ENCODE measurements at regions of chr2 and their contacts with region 1.

Region 1: GRCh38 chr2:143217512-143218115 is 88.4 kb downstream of the ARHGAP15 start:
- DNase-seq: no peak
- ATAC-seq: no peak
- H3K4me3 ChIP-seq: no peak overlapping the region
- H3K4me3 Mint-ChIP-seq: no peak overlapping the region
- H3K27ac ChIP-seq: peak overlapping the region in 1 of 2 donors; percentile 6
- H3K27ac Mint-ChIP-seq: peak overlapping the region; percentile 65
- H3K4me1 ChIP-seq: peaks cover 5% of the 10 kb centered on the region
- H3K4me1 Mint-ChIP-seq: peaks cover 68% of the 10 kb centered on the region
- H3K27me3 ChIP-seq: no peaks in the 10 kb centered on the region
- H3K27me3 Mint-ChIP-seq: no peaks in the 10 kb centered on the region
- CTCF ChIP-seq: no peak

Region 2: DNA sequence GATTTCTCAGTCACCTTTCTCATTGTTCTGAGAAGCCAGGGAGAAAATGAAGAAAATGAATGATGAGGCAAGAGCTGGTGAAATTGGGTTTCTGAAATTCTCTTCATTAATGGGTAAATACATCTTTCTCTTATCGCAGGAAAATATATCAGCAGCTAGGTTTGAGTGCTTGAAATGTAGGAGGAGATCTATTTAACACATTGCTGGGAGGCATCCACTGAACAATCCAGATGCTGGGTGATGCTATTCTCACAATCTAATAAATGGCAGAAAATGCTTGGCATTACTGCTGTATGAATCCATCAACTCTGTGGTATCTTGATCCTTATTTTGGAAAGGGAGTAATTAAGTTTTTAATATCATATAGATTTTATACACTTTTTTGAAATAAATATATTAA is 887.2 kb before region 1 on chr2:
- CTCF ChIA-PET with region 1: no interaction called
- POLR2A ChIA-PET with region 1: no interaction called
- intact Hi-C with region 1: no loop called
- DNase-seq: no peak
- ATAC-seq: no peak
- H3K4me3 ChIP-seq: no peak overlapping the region
- H3K4me3 Mint-ChIP-seq: no peak overlapping the region
- H3K27ac ChIP-seq: no peak overlapping the region
- H3K27ac Mint-ChIP-seq: no peak overlapping the region
- H3K4me1 ChIP-seq: no peaks in the 10 kb centered on the region
- H3K4me1 Mint-ChIP-seq: no peaks in the 10 kb centered on the region
- H3K27me3 ChIP-seq: no peaks in the 10 kb centered on the region
- H3K27me3 Mint-ChIP-seq: no peaks in the 10 kb centered on the region
- CTCF ChIP-seq: no peak

Region 3: DNA sequence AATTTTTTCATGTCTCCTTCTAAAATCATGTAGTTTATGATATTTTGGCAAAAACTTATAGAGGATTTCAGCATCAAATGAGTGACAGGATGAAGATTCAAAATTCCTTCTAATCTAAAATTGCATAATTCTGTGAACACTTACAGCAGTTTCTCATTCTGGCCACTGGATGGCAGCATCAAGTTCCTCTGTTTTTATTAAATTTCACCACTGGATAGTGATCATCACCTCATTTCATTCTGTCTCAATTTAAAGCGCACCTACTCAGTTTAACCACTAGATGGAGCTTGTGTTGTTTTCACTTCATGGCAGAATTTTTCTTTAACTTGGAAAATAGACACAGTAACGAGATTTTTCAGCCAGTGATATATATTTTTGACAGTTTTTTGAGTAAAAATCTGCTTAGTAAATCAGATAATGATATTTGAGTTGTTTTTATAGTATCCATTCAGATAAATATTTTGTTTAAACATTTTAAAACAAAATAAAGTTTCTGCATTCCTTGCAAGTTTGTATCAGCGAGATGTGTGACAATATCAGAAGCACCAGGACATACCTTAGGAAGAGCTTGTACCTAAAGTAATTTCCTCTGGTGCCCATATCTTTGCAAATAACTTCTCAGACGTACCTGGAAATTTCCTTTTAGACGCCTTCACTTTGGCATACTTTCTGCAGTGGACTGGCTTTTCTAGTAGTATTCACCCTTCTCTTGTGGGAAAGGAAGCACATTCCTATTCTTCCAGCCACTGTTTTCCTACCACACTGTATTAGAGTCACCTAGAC is 183.1 kb before region 1 on chr2:
- CTCF ChIA-PET with region 1: interaction called, 6 read pairs
- POLR2A ChIA-PET with region 1: no interaction called
- intact Hi-C with region 1: loop called (anchors 2 to 5 kb)
- DNase-seq: peak; percentile 20 to 88 (median 38)
- ATAC-seq: peak; percentile 100
- H3K4me3 ChIP-seq: no peak overlapping the region
- H3K4me3 Mint-ChIP-seq: no peak overlapping the region
- H3K27ac ChIP-seq: no peak overlapping the region
- H3K27ac Mint-ChIP-seq: no peak overlapping the region
- H3K4me1 ChIP-seq: no peaks in the 10 kb centered on the region
- H3K4me1 Mint-ChIP-seq: no peaks in the 10 kb centered on the region
- H3K27me3 ChIP-seq: no peaks in the 10 kb centered on the region
- H3K27me3 Mint-ChIP-seq: peaks cover 3% of the 10 kb centered on the region
- CTCF ChIP-seq: peak; percentile 98

Region 4: DNA sequence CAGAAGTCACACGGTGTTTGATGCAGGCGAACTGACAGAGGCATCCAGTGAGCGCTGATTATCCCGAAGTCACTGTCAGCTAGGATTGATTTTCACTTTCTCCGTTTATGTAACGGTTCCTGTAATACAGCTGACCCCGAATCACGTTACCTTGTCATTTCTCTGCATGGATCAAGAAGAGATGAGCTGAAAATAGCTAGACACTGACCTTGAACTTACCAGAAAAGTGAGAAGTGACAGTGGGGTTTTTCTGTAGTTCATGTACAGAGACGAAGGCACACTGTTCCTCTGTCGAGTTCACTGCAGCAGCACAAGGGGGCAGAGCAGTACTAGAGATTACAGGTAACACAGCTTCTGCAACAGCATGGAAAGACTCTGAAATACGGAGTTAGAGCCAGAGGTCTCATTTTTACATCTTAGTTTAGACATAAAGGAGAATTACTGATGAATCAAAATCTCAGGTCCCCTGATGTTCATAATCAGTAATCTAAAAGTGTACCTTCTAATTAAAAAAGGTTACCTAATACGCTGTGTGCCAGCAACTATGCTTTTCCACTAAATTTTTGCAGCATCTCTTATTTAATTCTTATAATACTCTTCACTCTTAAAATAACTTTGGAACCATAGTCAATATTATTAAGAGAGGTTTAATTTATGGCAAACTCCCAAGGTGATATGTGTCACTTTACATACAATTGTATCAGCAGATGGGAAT is 55.3 kb before region 1 on chr2:
- CTCF ChIA-PET with region 1: interaction called, 10 read pairs
- POLR2A ChIA-PET with region 1: interaction called, 5 read pairs
- intact Hi-C with region 1: loop called in 1 of 2 experiments (anchors 1 kb)
- DNase-seq: peak; percentile 24 to 86 (median 55)
- ATAC-seq: peak; percentile 99
- H3K4me3 ChIP-seq: no peak overlapping the region
- H3K4me3 Mint-ChIP-seq: peak overlapping the region; percentile 2
- H3K27ac ChIP-seq: no peak overlapping the region
- H3K27ac Mint-ChIP-seq: peak overlapping the region; percentile 84
- H3K4me1 ChIP-seq: peaks cover 13% of the 10 kb centered on the region
- H3K4me1 Mint-ChIP-seq: peaks cover 95% of the 10 kb centered on the region
- H3K27me3 ChIP-seq: no peaks in the 10 kb centered on the region
- H3K27me3 Mint-ChIP-seq: no peaks in the 10 kb centered on the region
- CTCF ChIP-seq: peak; percentile 82

Region 5: DNA sequence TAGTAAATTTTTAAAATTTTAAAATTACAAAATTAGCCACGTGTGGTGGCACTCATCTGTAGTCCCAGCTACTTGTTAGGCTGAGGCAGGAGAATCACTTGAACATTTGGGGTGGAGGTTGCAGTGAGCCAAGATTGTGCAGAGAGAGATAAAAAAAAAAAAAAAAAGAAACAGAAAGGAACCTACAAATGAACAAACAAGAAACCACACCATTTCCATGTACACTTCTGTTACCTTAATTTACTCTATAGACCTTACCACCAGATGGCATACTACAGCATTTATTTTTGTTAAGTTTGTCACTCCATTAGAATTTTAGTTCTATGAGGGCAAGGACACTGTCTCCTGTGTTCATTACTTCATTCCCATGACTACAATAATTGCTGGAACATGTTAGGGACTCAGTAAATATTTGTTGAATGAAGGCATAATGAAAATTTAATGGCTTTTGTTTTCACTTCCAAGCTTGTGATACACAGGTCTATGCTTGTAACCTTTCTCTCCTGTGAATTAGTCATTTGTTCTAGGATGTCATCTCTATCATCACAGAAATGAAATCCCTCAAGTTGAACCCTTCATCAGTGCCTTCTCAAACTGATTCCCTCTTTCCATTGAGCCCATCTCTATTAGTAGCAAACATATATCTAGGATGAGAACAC is 12.4 kb before region 1 on chr2:
- CTCF ChIA-PET with region 1: interaction called, 8 read pairs
- POLR2A ChIA-PET with region 1: interaction called, 3 read pairs
- intact Hi-C with region 1: loop called in 1 of 2 experiments (anchors 2 kb)
- DNase-seq: peak in 4 of 14 experiments; percentile 15 to 72 (median 69)
- ATAC-seq: peak; percentile 90
- H3K4me3 ChIP-seq: no peak overlapping the region
- H3K4me3 Mint-ChIP-seq: no peak overlapping the region
- H3K27ac ChIP-seq: no peak overlapping the region
- H3K27ac Mint-ChIP-seq: peak overlapping the region; percentile 40
- H3K4me1 ChIP-seq: peaks cover 14% of the 10 kb centered on the region
- H3K4me1 Mint-ChIP-seq: peaks cover 67% of the 10 kb centered on the region
- H3K27me3 ChIP-seq: no peaks in the 10 kb centered on the region
- H3K27me3 Mint-ChIP-seq: no peaks in the 10 kb centered on the region
- CTCF ChIP-seq: peak; percentile 56